WTC11 (cell line): ENCODE measurements at regions of chr19 and their contacts with region 1.

Region 1: GRCh38 chr19:5292822-5293611 is 47.6 kb downstream of the PTPRS start:
- DNase-seq: peak; percentile 78
- ATAC-seq: peak; percentile 71
- H3K4me3 Mint-ChIP-seq: peak overlapping the region; percentile 79
- H3K27ac Mint-ChIP-seq: no peak overlapping the region
- H3K4me1 Mint-ChIP-seq: peaks cover 22% of the 10 kb centered on the region
- H3K27me3 Mint-ChIP-seq: no peaks in the 10 kb centered on the region
- CTCF ChIP-seq: no peak

Region 2: GRCh38 chr19:5314907-5315298 is 21.9 kb after region 1 on chr19:
- CTCF ChIA-PET with region 1: no interaction called
- POLR2A ChIA-PET with region 1: no interaction called
- DNase-seq: no peak
- ATAC-seq: no peak
- H3K4me3 Mint-ChIP-seq: no peak overlapping the region
- H3K27ac Mint-ChIP-seq: peak overlapping the region; percentile 10; the same call in 1 of the 2 replicates
- H3K4me1 Mint-ChIP-seq: no peaks in the 10 kb centered on the region
- H3K27me3 Mint-ChIP-seq: no peaks in the 10 kb centered on the region
- CTCF ChIP-seq: no peak

Region 3: DNA sequence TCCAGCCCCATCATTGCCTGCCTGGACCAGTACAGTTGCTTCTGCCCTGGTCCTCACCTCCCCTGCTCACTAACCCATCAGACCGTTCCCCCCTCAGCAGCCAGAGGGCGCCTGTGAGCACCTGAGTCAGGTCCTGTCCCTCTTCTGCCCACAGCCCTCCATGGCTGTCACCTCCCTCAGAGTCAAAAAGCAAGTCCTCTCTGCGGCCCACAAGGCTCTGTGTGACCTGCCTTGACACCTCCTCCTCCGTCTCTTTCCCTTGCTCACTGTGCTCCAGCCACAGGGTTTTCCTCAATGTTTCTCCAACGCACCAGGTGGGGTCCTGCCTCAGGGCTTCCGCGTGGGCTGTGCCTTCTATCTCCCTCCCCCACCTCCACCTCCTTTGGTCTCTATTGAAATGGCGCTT is 76.9 kb after region 1 on chr19:
- CTCF ChIA-PET with region 1: no interaction called
- POLR2A ChIA-PET with region 1: no interaction called
- DNase-seq: peak; percentile 93
- ATAC-seq: peak; percentile 95
- H3K4me3 Mint-ChIP-seq: no peak overlapping the region
- H3K27ac Mint-ChIP-seq: no peak overlapping the region
- H3K4me1 Mint-ChIP-seq: no peaks in the 10 kb centered on the region
- H3K27me3 Mint-ChIP-seq: peaks cover 16% of the 10 kb centered on the region
- CTCF ChIP-seq: peak; percentile 73

Region 4: GRCh38 chr19:5445071-5446062 is 152.3 kb after region 1 on chr19:
- CTCF ChIA-PET with region 1: interaction called, 4 read pairs
- POLR2A ChIA-PET with region 1: interaction called, 12 read pairs
- DNase-seq: no peak
- ATAC-seq: no peak
- H3K4me3 Mint-ChIP-seq: no peak overlapping the region
- H3K27ac Mint-ChIP-seq: no peak overlapping the region
- H3K4me1 Mint-ChIP-seq: peaks cover 2% of the 10 kb centered on the region; the same call in 1 of the 2 replicates
- H3K27me3 Mint-ChIP-seq: peaks cover 22% of the 10 kb centered on the region
- CTCF ChIP-seq: no peak